Heart right ventricle (tissue), 16 donors: ENCODE measurements at regions of chr10 and their contacts with region 1.

Region 1: GRCh38 chr10:97618285-97618684 is 15.0 kb downstream of the MORN4 start:
- DNase-seq: no peak
- ATAC-seq: no peak
- H3K4me3 ChIP-seq: no peak overlapping the region
- H3K27ac ChIP-seq: no peak overlapping the region
- H3K4me1 ChIP-seq: no peaks in the 10 kb centered on the region
- H3K27me3 ChIP-seq: no peaks in the 10 kb centered on the region
- CTCF ChIP-seq: no peak

Region 2: DNA sequence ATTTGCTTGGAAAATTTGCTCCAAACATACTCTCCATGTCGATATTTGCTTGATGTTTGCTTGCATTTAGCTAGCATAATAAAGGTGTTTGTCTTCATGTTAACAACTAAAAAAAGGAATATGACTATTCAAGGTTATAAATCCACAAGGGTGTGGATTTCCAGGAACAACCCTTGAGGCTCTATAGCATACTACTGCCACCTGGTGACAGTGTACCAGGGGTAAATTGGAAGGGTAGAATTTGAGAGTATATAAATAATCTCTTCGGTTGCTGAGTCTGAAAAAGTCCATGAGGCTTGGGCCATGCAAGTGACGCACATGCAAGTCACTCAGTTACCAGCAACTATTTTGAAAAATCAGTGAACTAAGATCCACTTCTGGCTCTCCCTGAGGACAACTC is 500.9 kb before region 1 on chr10:
- intact Hi-C with region 1: no loop called
- DNase-seq: no peak
- ATAC-seq: peak in 4 of 8 donors; percentile 37 to 60 (median 44)
- H3K4me3 ChIP-seq: no peak overlapping the region
- H3K27ac ChIP-seq: no peak overlapping the region
- H3K4me1 ChIP-seq: peaks cover 0 to 3% (median 0%) of the 10 kb centered on the region in 9 donors
- H3K27me3 ChIP-seq: peaks cover 0 to 23% (median 9%) of the 10 kb centered on the region in 7 donors
- CTCF ChIP-seq: peak; percentile 31 to 66 (median 45)

Region 3: GRCh38 chr10:97407211-97407951 is 210.9 kb before region 1 on chr10:
- intact Hi-C with region 1: loop called in 6 of 10 experiments (anchors 2 to 10 kb)
- DNase-seq: peak in 1 of 2 donors; percentile 54
- ATAC-seq: peak; percentile 85 to 93 (median 91)
- H3K4me3 ChIP-seq: peak overlapping the region in 1 of 10 donors; percentile 7
- H3K27ac ChIP-seq: peak overlapping the region in 2 of 10 donors; percentile 19 to 87
- H3K4me1 ChIP-seq: peaks cover 0 to 33% (median 8%) of the 10 kb centered on the region in 9 donors
- H3K27me3 ChIP-seq: no peaks in the 10 kb centered on the region
- CTCF ChIP-seq: peak; percentile 67 to 92 (median 85)

Region 4: GRCh38 chr10:97454330-97455036 is 163.8 kb before region 1 on chr10:
- intact Hi-C with region 1: loop called in 1 of 10 experiments (anchors 5 kb)
- DNase-seq: peak in 1 of 2 donors; percentile 44
- ATAC-seq: peak in 5 of 8 donors; percentile 7 to 49 (median 41)
- H3K4me3 ChIP-seq: no peak overlapping the region
- H3K27ac ChIP-seq: peak overlapping the region in 2 of 10 donors; percentile 20 to 32
- H3K4me1 ChIP-seq: peaks cover 0 to 53% (median 29%) of the 10 kb centered on the region in 9 donors
- H3K27me3 ChIP-seq: no peaks in the 10 kb centered on the region
- CTCF ChIP-seq: no peak

Region 5: GRCh38 chr10:97869091-97870042 is 251.1 kb after region 1 on chr10:
- intact Hi-C with region 1: no loop called
- DNase-seq: peak; percentile 75 to 82
- ATAC-seq: peak; percentile 90 to 98 (median 95)
- H3K4me3 ChIP-seq: no peak overlapping the region
- H3K27ac ChIP-seq: no peak overlapping the region
- H3K4me1 ChIP-seq: peaks cover 0 to 13% (median 9%) of the 10 kb centered on the region in 9 donors
- H3K27me3 ChIP-seq: peaks cover 0 to 36% (median 19%) of the 10 kb centered on the region in 7 donors
- CTCF ChIP-seq: peak; percentile 46 to 83 (median 74)